Right ventricle myocardium superior (tissue), 1 donor: ENCODE measurements at regions of chr3 and their contacts with region 1.

Region 1: DNA sequence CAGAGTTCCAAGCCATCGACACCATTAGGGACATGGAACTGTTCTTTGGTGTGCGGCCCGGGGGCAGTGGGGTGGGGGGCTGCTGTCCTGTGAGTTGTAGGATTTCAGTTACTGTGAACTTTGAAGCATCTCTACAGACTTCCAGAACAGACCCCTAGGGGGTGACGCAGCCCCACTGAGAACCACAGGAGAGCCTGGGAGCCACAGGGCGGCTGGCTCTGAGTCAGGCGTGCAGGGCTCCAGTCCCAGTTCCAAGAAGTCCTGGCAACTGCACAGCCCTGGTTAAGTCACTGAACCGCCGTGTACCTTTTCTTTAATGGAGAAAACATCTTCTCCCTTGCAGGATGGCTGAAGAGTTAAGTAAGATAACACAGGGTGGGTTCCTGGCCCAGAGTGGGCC is 23.5 kb upstream of the LRTM1 start:
- DNase-seq: peak; percentile 88
- ATAC-seq: peak; percentile 98

Region 2: DNA sequence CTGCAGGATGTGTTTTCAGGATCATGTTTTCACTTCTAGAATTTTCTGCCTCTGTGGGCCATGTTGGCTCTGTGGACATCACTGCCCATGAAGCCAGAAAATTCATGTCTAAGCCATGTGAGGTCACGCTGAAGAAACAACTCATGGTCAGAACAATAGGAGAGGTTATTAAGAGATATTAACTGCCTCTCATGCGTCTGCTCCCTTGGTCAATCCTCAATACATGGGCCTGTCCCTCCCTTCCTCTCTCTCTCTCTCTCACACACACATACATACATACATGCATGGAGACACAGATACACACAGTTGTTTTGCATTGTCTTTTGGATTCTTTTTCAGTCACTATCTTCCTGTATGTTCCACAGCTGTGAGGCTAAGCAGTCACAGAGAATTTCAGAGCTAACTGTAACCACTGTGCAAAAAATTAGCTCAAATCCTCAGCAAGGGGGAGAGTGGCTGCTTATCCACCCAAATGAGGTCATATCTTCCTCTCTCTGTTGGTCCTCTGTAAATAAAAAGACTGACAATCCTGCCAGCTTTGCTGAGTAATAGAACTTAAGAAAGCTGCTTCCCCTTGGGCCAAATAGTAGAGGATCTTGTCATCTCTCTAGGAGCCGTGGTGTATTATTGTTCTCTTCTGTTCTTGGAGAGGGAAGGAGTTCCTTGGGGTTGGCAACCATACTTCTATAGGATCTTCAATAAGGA is 69.1 kb before region 1 on chr3:
- intact Hi-C with region 1: no loop called
- DNase-seq: no peak
- ATAC-seq: peak; percentile 90

Region 3: GRCh38 chr3:55180936-55181535 is 229.6 kb after region 1 on chr3:
- intact Hi-C with region 1: loop called (anchors 5 kb)
- DNase-seq: no peak
- ATAC-seq: no peak